A549 (cell line): ENCODE measurements at regions of chr7 and their contacts with region 1.

Region 1: DNA sequence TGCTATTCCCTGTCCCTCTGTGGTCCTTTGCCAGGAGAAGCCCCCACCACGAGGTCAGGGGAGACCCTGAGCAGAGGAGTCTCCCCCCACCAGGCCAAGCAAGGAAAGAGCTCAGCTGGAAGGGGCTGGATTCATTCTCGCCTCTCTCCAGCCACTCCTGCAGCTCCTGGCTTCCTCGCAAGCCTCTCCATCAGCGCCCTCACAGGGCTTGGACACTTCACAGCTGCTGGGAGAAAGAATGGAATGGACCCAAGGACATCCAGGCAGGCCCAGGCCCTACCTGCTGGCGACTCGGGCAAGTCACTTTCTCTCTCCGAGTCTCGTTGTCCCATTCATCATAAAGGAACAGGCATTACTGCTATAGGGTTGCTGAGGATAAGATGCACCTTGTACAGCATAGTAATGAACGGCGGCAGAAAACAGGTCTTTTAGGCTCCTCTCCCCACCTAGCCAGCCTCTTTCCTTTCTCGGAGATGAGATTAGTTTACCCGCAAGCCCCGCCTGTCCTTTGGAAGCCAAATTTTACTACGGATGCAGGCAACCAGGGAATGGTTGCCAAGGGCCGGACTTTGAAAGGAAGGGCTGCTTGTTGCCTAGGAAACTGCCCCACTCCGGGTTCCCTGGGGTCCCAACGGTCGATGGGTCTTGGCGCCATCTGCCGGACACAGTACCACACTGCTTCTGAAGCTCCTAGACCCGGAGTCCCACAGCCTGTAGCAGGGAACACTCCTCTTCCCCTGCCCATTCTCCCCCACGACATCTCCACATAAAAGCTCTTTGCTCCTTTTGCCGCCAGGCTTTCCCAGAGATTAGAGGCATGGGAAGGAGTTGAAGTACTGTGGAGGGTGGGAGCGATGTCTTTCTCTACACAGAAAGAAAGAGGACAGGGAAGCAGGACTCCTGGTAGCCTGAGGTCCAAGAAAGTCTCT is 22.3 kb downstream of the IMPDH1 start:
- DNase-seq: peak; percentile 66 to 97
- ATAC-seq: peak; percentile 58 to 91
- H3K4me3 ChIP-seq: no peak overlapping the region
- H3K27ac ChIP-seq: no peak overlapping the region
- H3K4me1 ChIP-seq: no peaks in the 10 kb centered on the region
- CTCF ChIP-seq: peak; percentile 81
- EP300 ChIP-seq: no peak
- POLR2A ChIP-seq: no peak
- RAD21 ChIP-seq: peak; percentile 68 to 73

Region 2: GRCh38 chr7:128343554-128344430 is 43.7 kb before region 1 on chr7 and contains the start of gene RBM28:
- CTCF ChIA-PET with region 1: interaction called, 800 read pairs
- POLR2A ChIA-PET with region 1: interaction called, 13 read pairs
- DNase-seq: peak; percentile 92 to 98
- ATAC-seq: peak; percentile 87 to 95
- H3K4me3 ChIP-seq: peak within 1 kb of the TSS; percentile 94
- H3K27ac ChIP-seq: peak within 1 kb of the TSS; percentile 89 to 94
- H3K4me1 ChIP-seq: peaks cover 20% of the 10 kb centered on the region; the same call in 2 of the 3 replicates
- CTCF ChIP-seq: no peak
- EP300 ChIP-seq: no peak
- POLR2A ChIP-seq: peak; percentile 96
- RAD21 ChIP-seq: no peak
- polyA plus RNA-seq, gene RBM28: 51.9 and 77.3 TPM in 2 replicates

Region 3: DNA sequence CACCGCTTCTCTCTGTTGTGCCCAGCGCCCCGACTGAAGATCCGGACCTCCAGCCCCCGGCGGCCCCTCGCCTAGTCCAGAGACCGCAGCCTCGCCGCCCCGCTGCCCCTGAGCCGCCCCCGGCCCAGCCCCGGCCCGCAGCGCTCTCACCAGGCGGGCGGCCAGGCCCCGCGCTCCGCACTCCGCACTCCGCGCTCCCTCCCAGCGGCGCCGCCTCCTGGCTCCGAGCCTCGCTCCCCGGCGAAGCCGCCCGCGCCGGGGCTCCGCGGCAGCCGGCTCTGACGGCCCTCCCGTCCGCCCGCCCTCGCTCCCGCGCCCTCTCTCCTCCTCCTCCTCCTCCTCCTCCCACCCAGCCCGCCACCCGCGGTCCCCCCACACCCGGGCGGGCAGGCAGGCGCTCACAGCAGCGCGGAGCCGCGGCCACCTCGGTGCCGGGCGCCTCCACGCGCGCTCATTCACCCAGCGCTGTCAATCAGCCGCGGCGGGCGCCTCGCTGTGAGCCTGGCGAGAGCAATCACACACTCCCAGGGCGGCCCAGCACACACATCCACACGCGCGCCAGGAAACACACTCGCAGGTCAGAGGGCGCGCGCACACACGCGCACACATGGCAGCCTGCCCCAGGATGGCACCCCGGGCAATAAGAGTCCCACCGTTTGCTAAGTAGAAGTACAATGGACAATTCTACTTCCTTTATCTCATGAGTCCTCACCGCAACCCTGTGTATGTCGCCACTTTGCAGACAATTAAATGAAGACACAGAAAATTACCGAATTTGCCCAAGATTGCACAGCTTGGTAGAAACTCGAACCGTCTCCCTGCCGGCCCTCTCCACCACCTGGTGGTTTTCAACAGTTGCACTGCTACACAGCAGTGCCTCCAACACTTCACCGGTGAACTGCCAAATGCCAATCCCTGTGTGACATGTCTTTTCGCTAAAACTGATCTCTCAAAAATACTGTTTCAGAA is 25.8 kb before region 1 on chr7 and contains the start of gene PRRT4:
- CTCF ChIA-PET with region 1: interaction called, 287 read pairs
- POLR2A ChIA-PET with region 1: no interaction called
- DNase-seq: peak; percentile 45 to 63
- ATAC-seq: peak; percentile 70 to 83
- H3K4me3 ChIP-seq: peak within 1 kb of the TSS; percentile 66
- H3K27ac ChIP-seq: peak within 1 kb of the TSS; percentile 34 to 78; a peak in 5 of 6 replicates
- H3K4me1 ChIP-seq: no peaks in the 10 kb centered on the region
- CTCF ChIP-seq: 0 out of 3 replicates have a peak, but pooled peaks have one; percentile 13
- EP300 ChIP-seq: no peak
- POLR2A ChIP-seq: no peak
- RAD21 ChIP-seq: no peak
- polyA plus RNA-seq, gene PRRT4: 0.17 and 0.18 TPM in 2 replicates

Region 4: GRCh38 chr7:128398016-128398840 is 10.7 kb after region 1 on chr7:
- CTCF ChIA-PET with region 1: interaction called, 287 read pairs
- POLR2A ChIA-PET with region 1: no interaction called
- DNase-seq: peak; percentile 52 to 74
- ATAC-seq: peak; percentile 83 to 92
- H3K4me3 ChIP-seq: no peak overlapping the region
- H3K27ac ChIP-seq: no peak overlapping the region
- H3K4me1 ChIP-seq: no peaks in the 10 kb centered on the region
- CTCF ChIP-seq: peak; percentile 86
- EP300 ChIP-seq: no peak
- POLR2A ChIP-seq: no peak
- RAD21 ChIP-seq: peak; percentile 74 to 80

Region 5: DNA sequence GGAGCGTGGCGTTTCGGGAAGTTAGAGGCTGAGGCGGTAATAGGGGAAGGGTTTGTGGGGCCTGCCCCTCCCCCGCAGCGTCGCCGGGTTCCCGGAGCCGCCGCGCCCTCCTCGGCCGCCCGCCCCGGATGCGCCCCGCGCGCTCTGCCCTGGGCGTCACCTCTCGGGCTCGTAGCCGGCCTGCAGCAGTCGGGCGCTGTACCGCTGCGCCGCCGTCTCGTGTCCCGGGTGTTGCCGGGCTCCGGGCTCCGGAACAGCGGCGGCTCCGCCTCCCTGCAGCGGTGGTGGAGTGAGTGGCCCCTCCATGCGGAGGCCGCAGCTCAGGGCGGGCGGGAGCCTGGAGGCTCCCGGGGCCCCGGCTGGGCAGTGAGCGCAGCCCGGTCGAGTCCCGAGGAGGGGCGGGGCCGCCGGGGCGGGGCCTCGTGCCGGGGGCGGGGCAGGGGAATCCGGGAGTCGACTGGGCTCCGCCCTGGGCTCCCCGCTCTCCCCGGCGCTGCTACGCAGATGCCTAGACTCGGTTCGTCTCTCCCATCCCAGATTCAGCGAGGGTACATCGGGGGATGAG is 22.2 kb after region 1 on chr7 and contains the start of gene IMPDH1:
- CTCF ChIA-PET with region 1: interaction called, 120 read pairs
- POLR2A ChIA-PET with region 1: interaction called, 3 read pairs
- DNase-seq: peak; percentile 74 to 93
- ATAC-seq: peak; percentile 76 to 91
- H3K4me3 ChIP-seq: peak within 1 kb of the TSS; percentile 69
- H3K27ac ChIP-seq: peak within 1 kb of the TSS; percentile 84 to 94
- H3K4me1 ChIP-seq: peaks cover 31% of the 10 kb centered on the region
- CTCF ChIP-seq: no peak
- EP300 ChIP-seq: no peak
- POLR2A ChIP-seq: peak; percentile 83
- RAD21 ChIP-seq: no peak
- polyA plus RNA-seq, gene IMPDH1: 55.4 and 83.3 TPM in 2 replicates

Region 6: GRCh38 chr7:128415217-128415785 is 27.8 kb after region 1 on chr7:
- CTCF ChIA-PET with region 1: interaction called, 16 read pairs
- POLR2A ChIA-PET with region 1: no interaction called
- DNase-seq: no peak
- ATAC-seq: no peak
- H3K4me3 ChIP-seq: no peak overlapping the region
- H3K27ac ChIP-seq: no peak overlapping the region
- H3K4me1 ChIP-seq: peaks cover 6% of the 10 kb centered on the region; the same call in 1 of the 3 replicates
- CTCF ChIP-seq: no peak
- EP300 ChIP-seq: no peak
- POLR2A ChIP-seq: no peak
- RAD21 ChIP-seq: no peak

Region 7: GRCh38 chr7:130154501-130155317 is 1767.2 kb after region 1 on chr7:
- CTCF ChIA-PET with region 1: no interaction called
- POLR2A ChIA-PET with region 1: no interaction called
- DNase-seq: no peak
- ATAC-seq: peak; percentile 21 to 24; a peak in 5 of 6 replicates
- H3K4me3 ChIP-seq: no peak overlapping the region
- H3K27ac ChIP-seq: 0 out of 6 replicates have a peak overlapping the region, but pooled peaks of 1 of the 2 experiments have one; percentile 17
- H3K4me1 ChIP-seq: no peaks in the 10 kb centered on the region
- CTCF ChIP-seq: no peak
- EP300 ChIP-seq: no peak
- POLR2A ChIP-seq: no peak
- RAD21 ChIP-seq: no peak